Right ventricle myocardium inferior (tissue), 1 donor: ENCODE measurements at regions of chr6 and their contacts with region 1.

Region 1: DNA sequence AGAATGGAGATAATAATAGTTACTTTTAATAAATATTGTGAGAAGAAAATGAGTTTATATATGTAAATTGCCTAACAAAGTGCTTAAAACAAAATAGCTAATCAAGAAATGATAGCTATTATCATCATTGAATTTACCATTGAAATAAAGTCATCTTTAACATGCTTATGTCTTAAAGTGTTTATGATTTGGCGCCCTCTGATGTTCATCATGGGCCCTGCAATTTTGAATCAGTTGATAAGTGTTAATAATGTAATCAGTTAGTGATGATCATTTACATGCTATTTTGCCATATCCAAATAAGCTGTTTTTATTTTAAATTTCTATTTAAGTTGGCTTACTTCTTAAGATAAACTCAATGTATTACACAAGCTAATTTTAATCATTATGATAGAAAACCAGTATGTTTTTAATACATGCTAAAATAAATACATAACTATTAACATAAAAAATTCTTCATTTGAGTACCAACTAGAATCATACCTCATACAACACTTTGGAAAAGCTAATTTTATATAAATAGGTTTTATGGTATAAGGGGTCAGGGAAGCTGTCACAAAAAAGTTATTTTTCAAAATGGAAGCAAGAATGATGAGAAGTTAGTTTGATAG is 39.2 kb upstream of the TPD52L1 start:
- DNase-seq: no peak
- ATAC-seq: no peak

Region 2: DNA sequence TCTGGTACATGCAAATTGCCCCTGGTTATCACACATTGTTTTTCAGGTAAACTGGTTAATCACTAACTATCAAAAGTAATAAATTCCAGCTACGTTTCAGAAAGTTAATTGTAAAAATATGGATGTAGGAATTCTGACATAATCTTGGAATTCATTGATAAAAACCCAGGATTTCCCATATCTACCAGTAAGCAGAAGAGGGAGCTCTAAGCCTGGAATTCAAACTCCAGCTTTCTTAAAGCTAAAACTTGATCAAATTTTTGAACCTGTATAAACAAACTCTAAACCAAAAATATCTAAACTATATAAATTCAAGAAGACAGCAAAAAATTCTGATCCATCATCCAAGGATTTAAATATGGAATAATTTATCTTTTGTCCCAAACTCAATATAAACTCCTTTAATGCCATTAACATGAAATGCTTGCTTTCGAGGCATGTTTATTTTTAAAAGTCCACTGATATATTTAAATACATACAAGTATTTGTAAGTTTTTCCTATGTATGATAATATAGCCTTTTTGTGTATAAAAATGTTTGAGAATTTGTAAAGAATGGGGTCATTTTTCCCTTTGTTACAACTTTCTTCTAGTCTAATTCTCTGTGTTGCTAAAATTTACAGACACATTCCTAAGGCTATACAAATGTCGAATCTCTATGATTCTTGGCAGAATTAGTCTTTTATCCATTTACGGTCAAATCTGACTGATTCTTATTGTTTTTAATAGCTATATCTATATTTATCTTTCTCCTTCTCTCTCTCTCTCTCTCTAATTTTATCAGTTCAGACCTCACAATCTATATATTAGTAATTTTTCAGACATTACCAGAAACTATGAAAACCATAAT is 243.5 kb before region 1 on chr6:
- intact Hi-C with region 1: loop called (anchors 1 kb)
- DNase-seq: no peak
- ATAC-seq: no peak

Region 3: GRCh38 chr6:125273965-125274364 is 159.6 kb after region 1 on chr6:
- intact Hi-C with region 1: no loop called
- DNase-seq: no peak
- ATAC-seq: peak; percentile 19